Common myeloid progenitor, CD34-positive (primary cell): ENCODE measurements at regions of chr15 and their contacts with region 1.

Region 1: GRCh38 chr15:50116473-50116872 is 2.6 kb downstream of the ATP8B4 start:
- DNase-seq: peak in 2 of 3 donors; percentile 55 to 72
- H3K4me3 ChIP-seq: peak overlapping the region in 6 of 7 experiments; percentile 9 to 85 (median 74)
- H3K27ac ChIP-seq: peak overlapping the region in 1 of 2 experiments; percentile 59
- H3K4me1 ChIP-seq: peaks cover 30 to 69% (median 51%) of the 10 kb centered on the region in 4 experiments
- H3K27me3 ChIP-seq: no peaks in the 10 kb centered on the region

Region 2: DNA sequence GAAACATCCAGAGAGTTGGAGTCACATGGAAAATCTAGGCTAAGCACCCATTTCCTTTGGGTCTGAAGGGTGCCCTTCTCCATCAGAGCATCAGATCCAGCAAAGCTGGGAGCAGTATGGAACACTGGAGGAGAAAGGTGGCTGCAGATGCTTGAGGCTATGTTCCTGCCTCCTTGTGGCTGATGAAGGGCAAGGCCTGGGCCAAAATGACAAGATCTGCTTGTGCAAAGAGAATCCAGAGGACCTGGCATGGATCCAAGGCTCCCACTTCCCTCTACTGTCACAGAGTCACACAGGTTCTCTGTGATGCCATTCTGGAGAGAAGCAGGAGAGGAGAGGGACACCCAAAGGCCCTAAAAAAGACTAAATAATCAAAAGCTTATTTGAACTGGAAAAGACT is 11.8 kb after region 1 on chr15:
- CTCF ChIA-PET with region 1: interaction called, 52 read pairs
- POLR2A ChIA-PET with region 1: no interaction called
- DNase-seq: peak; percentile 78 to 82 (median 79)
- H3K4me3 ChIP-seq: no peak overlapping the region
- H3K27ac ChIP-seq: no peak overlapping the region
- H3K4me1 ChIP-seq: peaks cover 0 to 16% (median 9%) of the 10 kb centered on the region in 4 experiments
- H3K27me3 ChIP-seq: no peaks in the 10 kb centered on the region

Region 3: DNA sequence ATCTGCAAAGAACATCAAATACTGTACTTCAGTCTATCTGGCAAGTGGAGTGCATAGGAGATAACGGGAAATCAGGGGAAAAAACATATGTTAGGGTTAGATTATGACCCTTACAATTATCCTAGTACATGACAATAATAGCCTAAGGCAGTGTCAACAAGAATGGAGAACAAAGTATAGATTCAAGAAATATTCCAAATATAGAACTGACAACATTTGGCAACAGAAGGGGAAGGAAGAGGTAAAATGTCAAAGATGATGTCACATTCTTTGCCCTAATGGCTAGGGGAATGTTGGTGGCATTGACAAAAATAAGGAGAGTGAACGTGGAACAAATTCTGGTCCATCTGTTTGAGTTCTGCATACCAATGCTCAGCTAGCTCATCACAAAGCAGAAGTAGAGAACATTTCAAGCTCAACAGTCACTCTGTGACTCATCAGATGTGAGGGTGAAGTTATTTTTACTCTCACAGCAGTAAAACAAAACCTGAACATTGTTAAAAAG is 18.1 kb after region 1 on chr15:
- CTCF ChIA-PET with region 1: interaction called, 52 read pairs
- POLR2A ChIA-PET with region 1: no interaction called
- DNase-seq: peak; percentile 71 to 94 (median 87)
- H3K4me3 ChIP-seq: peak overlapping the region in 1 of 7 experiments; percentile 40
- H3K27ac ChIP-seq: peak overlapping the region; percentile 36 to 72
- H3K4me1 ChIP-seq: peaks cover 5 to 36% (median 26%) of the 10 kb centered on the region in 4 experiments
- H3K27me3 ChIP-seq: no peaks in the 10 kb centered on the region

Region 4: GRCh38 chr15:50471072-50471471 is 354.6 kb after region 1 on chr15:
- CTCF ChIA-PET with region 1: no interaction called
- POLR2A ChIA-PET with region 1: no interaction called
- DNase-seq: no peak
- H3K4me3 ChIP-seq: no peak overlapping the region
- H3K27ac ChIP-seq: no peak overlapping the region
- H3K4me1 ChIP-seq: no peaks in the 10 kb centered on the region
- H3K27me3 ChIP-seq: no peaks in the 10 kb centered on the region